Lower leg skin (tissue), 4 donors: ENCODE measurements at regions of chr11 and their contacts with region 1.

Region 1: DNA sequence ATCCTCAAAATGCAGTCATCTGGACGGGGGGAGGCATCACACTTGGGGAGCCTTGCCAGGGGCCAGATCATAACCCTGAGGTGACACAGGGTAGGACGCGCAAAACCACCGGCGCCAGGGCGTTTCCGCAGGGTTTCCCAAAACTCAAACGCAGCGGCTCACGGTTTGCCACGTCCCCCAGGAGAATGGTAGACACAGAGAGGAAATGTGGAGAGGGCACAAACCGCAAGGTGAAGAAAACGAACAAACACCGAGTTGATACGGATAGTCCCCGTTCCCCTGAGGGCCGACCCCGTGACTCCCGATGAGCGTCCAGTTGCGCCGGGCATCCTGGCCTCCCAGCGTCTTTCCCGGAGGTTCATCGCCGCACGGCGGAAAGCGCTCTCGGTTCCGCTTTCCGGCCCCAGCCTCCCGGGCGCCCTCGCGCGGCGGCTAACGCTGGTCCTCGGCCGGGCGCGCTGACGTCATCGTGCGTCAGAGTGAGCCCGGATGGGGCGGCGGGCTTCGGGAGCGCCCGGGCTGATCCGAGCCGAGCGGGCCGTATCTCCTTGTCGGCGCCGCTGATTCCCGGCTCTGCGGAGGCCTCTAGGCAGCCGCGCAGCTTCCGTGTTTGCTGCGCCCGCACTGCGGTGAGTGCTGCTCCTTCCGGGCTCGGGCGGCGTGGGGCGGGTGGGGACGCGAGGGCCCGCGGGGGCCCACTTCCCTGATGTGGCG is at the start of gene BIRC2:
- DNase-seq: peak; percentile 92 to 98
- H3K4me3 ChIP-seq: peak within 1 kb of the TSS; percentile 75
- CTCF ChIP-seq: peak in 1 of 3 donors; percentile 61
- POLR2A ChIP-seq: peak in 1 of 2 donors; percentile 50
- total RNA-seq, gene BIRC2: 39.3 to 49.3 (median 42.5) TPM

Region 2: GRCh38 chr11:101061606-101062005 is 1285.3 kb before region 1 on chr11:
- intact Hi-C with region 1: no loop called
- DNase-seq: no peak
- H3K4me3 ChIP-seq: no peak overlapping the region
- CTCF ChIP-seq: no peak
- POLR2A ChIP-seq: no peak

Region 3: DNA sequence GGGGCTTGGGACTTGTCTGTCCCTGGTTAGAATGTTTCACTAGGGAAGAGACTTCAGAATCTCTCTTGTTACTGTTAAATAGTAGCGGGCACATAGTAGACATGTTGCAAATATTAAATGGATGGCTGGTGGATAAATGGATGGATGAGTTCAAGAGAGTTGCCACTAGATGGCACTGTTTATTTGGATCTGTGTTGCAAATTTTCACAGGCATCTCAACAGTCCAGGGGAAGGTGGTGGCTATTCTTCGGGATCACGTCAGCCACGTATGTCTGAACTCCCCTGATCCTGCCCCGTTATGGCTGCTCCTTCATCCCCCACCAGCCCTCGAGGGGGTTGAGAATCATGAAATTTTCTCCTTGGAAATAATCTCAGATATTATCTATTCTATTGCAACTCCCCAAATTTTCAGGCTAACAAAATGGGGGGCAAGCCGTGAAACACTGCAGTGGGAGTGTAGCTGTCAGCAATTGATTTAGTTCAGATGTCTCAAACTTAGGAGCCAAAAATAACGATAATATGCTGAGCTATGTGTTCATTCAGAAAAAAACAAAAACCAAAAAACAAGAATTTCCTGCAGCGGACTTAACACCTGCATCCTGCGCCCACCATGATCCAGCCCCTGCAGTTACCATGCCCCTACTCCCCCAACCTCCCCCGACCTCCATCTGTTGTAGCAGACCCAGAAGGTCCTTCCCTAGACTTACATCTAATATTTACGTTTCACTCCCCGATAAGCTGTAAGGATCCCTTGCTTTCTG is 58.8 kb before region 1 on chr11:
- intact Hi-C with region 1: loop called (anchors 10 kb)
- DNase-seq: no peak
- H3K4me3 ChIP-seq: no peak overlapping the region
- CTCF ChIP-seq: no peak
- POLR2A ChIP-seq: no peak

Region 4: GRCh38 chr11:103659206-103659618 is 1312.3 kb after region 1 on chr11:
- intact Hi-C with region 1: no loop called
- DNase-seq: no peak
- H3K4me3 ChIP-seq: no peak overlapping the region
- CTCF ChIP-seq: no peak
- POLR2A ChIP-seq: no peak